Activated CD4-positive, alpha-beta T cell treated with anti-CD3 and anti-CD28 coated beads for 36 hours (primary cell): ENCODE measurements at regions of chr14 and their contacts with region 1.

Region 1: GRCh38 chr14:50085570-50086320 is 30.6 kb downstream of the VCPKMT start:
- DNase-seq: peak; percentile 71
- ATAC-seq: peak; percentile 27
- H3K4me3 Mint-ChIP-seq: peak overlapping the region; percentile 45
- H3K27ac Mint-ChIP-seq: peak overlapping the region; percentile 94
- H3K4me1 Mint-ChIP-seq: peaks cover 94% of the 10 kb centered on the region
- H3K27me3 Mint-ChIP-seq: no peaks in the 10 kb centered on the region

Region 2: DNA sequence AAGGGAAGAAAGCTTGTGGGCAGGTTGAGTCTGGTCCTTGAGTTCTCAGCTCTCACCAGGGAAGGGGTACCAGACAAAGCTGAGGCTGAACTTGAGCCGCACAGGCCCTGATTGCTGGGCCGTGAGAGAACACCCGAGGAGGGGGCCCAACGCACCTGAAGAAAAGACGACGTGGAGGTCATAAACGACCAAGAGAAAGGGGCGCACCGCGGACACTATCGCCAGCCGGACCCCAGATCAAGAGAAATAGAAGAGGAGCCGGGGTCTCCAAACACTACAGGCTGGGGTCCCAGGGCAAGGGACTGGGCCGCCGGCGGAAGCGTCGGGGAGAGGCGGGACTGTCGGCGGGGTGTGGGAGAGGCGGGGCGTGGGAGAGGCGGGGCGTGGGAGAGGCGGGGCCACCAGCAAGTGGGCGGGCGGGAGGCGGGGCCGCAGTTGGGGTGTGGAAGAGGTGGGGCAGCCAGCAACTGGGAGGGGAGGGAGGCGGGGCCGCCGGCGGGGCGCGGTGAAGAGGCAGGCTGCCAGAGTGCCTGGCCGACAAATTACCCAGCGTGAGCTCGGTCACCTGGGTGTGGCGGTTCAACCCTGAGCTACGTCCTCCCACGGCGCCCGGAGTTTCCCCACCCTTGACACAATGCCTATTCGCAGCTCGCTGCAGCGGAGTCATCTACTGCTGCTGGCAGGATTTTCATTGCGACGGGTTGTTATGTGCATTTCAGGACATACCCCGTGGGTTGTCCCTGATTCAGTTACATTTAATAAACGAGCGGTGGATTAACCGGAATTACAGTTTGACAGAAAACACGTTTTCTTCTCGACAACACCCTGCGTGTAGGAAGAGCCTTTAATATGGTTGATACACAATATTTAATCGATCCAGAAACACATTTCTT is 217.7 kb before region 1 on chr14:
- CTCF ChIA-PET with region 1: interaction called, 13 read pairs
- POLR2A ChIA-PET with region 1: interaction called, 10 read pairs
- intact Hi-C with region 1: loop called (anchors 1 to 2 kb)
- DNase-seq: peak; percentile 100
- ATAC-seq: peak; percentile 87
- H3K4me3 Mint-ChIP-seq: peak overlapping the region; percentile 98
- H3K27ac Mint-ChIP-seq: peak overlapping the region; percentile 96
- H3K4me1 Mint-ChIP-seq: peaks cover 22% of the 10 kb centered on the region
- H3K27me3 Mint-ChIP-seq: no peaks in the 10 kb centered on the region

Region 3: DNA sequence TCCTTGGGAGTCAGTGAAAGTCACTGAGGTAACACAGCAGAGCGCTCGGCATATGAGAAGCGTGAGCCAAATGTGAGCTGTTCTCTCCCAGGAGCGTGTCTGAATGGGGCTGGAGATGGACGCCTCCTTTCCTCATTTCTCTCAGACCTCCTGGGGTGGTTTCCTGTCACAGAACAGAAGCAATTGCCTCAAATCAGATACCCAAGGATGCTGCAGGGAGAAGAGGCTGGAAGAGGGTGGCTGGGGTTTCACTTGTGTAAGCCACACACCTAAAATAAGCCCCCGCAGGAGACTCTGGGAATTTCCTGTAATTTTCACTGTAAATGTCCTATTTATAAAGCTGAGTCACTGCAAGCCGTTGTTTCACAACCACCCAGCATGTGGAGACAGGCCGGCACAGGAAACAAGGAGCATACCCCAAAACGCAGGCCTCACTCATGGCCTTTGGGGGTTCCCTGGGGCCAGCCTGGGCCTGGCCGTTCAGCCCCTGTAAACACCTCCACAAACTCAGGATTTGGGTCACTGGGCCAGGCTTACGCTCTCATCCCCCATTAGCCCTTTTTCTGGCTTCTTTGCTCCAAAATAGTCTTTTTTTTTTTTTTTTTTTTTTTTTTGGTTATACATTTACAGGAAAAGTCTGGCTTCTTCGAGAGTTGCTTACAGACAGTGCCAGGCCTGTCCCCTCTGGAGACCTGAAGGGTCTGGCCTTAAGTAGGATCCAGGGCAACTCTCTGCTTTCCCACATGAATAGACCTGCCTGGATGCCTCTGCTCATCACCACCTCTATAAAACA is 24.7 kb before region 1 on chr14:
- CTCF ChIA-PET with region 1: interaction called, 19 read pairs
- POLR2A ChIA-PET with region 1: interaction called, 29 read pairs
- intact Hi-C with region 1: loop called (anchors 1 kb)
- DNase-seq: peak; percentile 65
- ATAC-seq: peak; percentile 6
- H3K4me3 Mint-ChIP-seq: peak overlapping the region; percentile 90
- H3K27ac Mint-ChIP-seq: peak overlapping the region; percentile 100
- H3K4me1 Mint-ChIP-seq: peaks cover 84% of the 10 kb centered on the region
- H3K27me3 Mint-ChIP-seq: no peaks in the 10 kb centered on the region

Region 4: DNA sequence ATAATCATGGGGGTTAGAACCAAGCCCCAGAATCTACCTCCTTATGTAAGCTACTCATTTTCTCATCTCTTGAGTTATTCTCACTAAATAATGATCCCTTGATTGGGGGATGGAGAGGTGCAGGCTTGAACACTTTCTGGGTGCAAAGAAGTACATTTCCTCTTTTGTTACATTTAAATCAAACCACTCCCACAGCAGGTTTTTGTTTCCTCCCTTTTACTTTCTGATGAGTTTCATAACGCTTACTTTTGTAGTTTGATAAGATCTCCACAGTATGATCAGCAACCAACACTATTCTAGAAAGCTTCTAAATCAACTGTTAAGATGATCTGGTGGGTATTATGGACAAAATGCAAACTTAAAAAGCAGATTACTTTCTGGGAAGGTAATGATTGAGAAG is 10.2 kb after region 1 on chr14:
- CTCF ChIA-PET with region 1: interaction called, 5 read pairs
- POLR2A ChIA-PET with region 1: interaction called, 5 read pairs
- intact Hi-C with region 1: loop called (anchors 1 kb)
- DNase-seq: no peak
- ATAC-seq: peak; percentile 66
- H3K4me3 Mint-ChIP-seq: peak overlapping the region; percentile 45
- H3K27ac Mint-ChIP-seq: peak overlapping the region; percentile 80
- H3K4me1 Mint-ChIP-seq: peaks cover 73% of the 10 kb centered on the region
- H3K27me3 Mint-ChIP-seq: no peaks in the 10 kb centered on the region

Region 5: GRCh38 chr14:50109342-50109741 is 23.6 kb after region 1 on chr14:
- CTCF ChIA-PET with region 1: interaction called, 32 read pairs
- POLR2A ChIA-PET with region 1: interaction called, 6 read pairs
- intact Hi-C with region 1: loop called (anchors 1 kb)
- DNase-seq: no peak
- ATAC-seq: no peak
- H3K4me3 Mint-ChIP-seq: no peak overlapping the region
- H3K27ac Mint-ChIP-seq: no peak overlapping the region
- H3K4me1 Mint-ChIP-seq: peaks cover 32% of the 10 kb centered on the region
- H3K27me3 Mint-ChIP-seq: no peaks in the 10 kb centered on the region

Region 6: GRCh38 chr14:50210074-50210473 is 124.3 kb after region 1 on chr14:
- CTCF ChIA-PET with region 1: no interaction called
- POLR2A ChIA-PET with region 1: no interaction called
- intact Hi-C with region 1: no loop called
- DNase-seq: no peak
- ATAC-seq: no peak
- H3K4me3 Mint-ChIP-seq: no peak overlapping the region
- H3K27ac Mint-ChIP-seq: no peak overlapping the region
- H3K4me1 Mint-ChIP-seq: peaks cover 7% of the 10 kb centered on the region
- H3K27me3 Mint-ChIP-seq: no peaks in the 10 kb centered on the region